MCF 10A (cell line): ENCODE measurements at regions of chr16 and their contacts with region 1.

Region 1: DNA sequence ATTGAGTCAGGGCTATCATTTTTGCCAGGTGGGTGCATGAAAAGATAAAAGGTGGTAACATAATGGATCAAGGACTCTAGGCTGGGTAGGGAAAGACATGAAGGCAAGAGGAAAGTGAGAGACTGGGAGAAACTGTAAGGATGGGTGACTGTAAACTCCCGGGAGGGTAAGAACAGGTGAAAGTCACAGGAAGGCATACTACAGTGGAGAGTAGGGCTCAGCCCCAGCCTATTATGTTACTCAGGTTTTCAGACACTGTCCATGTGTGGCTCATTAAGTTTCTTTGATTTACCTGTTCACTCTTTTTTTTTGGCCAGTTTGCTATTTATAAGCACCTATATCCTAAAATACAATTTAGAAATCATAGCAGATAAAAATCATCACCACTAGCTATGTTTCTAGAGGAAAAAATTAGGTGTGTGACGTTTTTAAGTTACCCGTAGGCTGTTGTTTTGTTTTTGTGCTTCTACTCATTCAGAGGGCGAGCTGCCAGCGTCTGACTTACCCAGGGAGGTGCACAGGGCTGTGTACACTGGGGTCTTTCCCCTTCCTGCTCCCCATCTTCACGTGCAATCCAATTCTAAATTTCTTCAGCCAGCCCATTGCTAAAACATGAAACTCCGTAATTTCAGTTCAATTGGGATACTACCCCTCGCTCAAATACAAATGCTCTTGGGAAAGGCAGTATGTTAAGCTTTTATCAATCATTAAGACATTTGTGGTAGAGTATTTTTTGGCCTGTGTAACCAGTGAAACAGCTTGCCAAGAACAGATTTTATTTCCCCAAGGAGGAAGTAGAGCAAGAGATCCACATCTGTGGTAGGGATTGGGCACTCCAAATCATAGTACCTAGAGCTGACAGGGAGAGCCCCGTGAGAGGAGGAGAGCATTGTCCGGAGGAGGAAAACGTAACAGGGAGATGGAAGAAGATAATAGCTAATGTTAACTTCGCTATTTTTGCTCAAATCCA is 21.7 kb upstream of the VWA3A start:
- DNase-seq: peak; percentile 63
- H3K4me3 Mint-ChIP-seq: no peak overlapping the region
- H3K27ac Mint-ChIP-seq: no peak overlapping the region
- H3K4me1 Mint-ChIP-seq: peaks cover 2% of the 10 kb centered on the region
- H3K27me3 Mint-ChIP-seq: no peaks in the 10 kb centered on the region
- CTCF ChIP-seq: no peak

Region 2: DNA sequence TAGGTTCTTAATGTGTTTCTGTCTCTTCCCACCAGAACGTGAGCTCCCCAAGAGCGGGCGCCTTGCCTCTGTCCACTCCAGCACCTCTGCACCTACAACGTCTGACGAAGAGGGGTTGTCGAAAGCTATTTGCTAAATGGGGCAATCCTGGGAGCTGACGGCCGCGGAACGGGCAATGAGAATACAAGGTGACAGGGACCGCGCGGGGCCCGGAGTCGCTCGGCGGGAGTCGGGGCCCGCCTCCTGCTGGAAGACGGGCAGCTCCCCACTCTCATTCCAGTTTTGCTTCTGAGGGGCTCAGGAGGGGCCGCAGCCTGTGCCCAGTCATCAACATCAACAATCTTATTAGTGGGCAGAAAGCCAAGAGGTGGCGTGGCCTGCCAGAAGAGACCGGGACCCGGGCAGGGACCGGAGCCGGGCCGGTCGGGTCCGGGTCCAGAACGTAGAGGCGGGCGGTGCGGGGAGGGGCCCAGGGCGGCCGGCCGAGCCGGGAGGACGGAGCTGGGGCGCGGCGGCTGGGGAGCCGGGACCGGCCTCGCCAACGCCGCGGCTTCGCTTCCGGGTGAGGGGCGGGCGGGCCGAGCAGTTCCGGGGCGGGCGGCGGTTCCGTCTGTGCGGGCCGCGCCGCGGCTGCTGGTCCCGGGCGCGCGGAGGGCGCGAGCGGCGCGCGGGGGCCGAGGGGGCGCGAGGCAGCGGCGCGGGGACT is 63.0 kb before region 1 on chr16 and contains the start of gene MOSMO:
- CTCF ChIA-PET with region 1: interaction called, 502 read pairs
- POLR2A ChIA-PET with region 1: interaction called, 78 read pairs
- intact Hi-C with region 1: no loop called
- DNase-seq: peak; percentile 74
- H3K4me3 Mint-ChIP-seq: peak within 1 kb of the TSS; percentile 90
- H3K27ac Mint-ChIP-seq: peak within 1 kb of the TSS; percentile 70
- H3K4me1 Mint-ChIP-seq: peaks cover 26% of the 10 kb centered on the region
- H3K27me3 Mint-ChIP-seq: no peaks in the 10 kb centered on the region
- CTCF ChIP-seq: no peak
- total RNA-seq, gene MOSMO: 16.4 and 17.1 TPM in 2 replicates

Region 3: GRCh38 chr16:22055878-22056277 is 14.8 kb before region 1 on chr16:
- CTCF ChIA-PET with region 1: no interaction called
- POLR2A ChIA-PET with region 1: interaction called, 10 read pairs
- intact Hi-C with region 1: no loop called
- DNase-seq: no peak
- H3K4me3 Mint-ChIP-seq: no peak overlapping the region
- H3K27ac Mint-ChIP-seq: no peak overlapping the region
- H3K4me1 Mint-ChIP-seq: no peaks in the 10 kb centered on the region
- H3K27me3 Mint-ChIP-seq: no peaks in the 10 kb centered on the region
- CTCF ChIP-seq: no peak